ENCODE measurements at regions of chr15 and their contacts with region 1.

Region 1: DNA sequence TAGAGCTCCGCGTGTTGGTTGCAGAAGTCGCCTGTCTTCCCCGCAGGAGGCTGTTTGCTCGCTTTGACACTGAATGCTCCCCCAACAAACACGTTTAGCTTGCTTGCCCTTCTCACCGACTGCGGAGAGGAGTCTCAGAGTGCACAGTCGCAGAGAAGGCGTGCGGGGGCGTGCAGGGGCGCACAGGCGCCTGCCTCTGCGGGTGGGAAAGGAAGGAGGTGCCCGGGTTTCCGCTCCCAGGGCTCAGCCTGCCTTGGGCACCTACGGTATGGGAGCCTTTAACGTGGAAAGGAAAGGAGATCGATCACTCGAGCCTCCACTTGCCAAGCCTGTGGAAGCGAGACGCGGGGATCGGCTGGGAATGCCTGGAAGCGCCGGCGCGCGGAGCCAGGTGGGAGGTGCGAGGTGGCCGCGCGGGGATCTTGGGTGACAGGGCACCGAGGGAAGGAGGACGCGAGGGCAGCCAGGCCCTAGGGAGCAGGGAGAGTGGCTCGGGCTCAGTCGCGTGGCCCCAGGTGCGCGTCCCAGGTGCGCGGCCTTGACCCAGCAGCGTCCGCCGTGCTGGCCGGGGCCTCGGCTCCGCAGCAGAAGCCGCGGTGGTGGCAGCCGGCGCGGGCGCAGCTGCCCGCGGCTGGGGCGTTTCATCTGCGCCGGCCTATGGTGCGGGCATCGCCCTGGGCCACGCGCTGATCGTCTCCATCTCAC is at the start of gene FAN1:
- DNase-seq: peak; percentile 88 to 92
- H3K4me3 ChIP-seq: peak within 1 kb of the TSS; percentile 28 to 83 (median 77)
- H3K27ac ChIP-seq: peak within 1 kb of the TSS; percentile 46 to 70 (median 67)
- H3K4me1 ChIP-seq: peaks cover 8 to 19% of the 10 kb centered on the region in 2 donors
- H3K27me3 ChIP-seq: no peaks in the 10 kb centered on the region
- CTCF ChIP-seq: peak in 1 of 6 experiments; percentile 21
- POLR2A ChIP-seq: peak; percentile 60 to 88
- total RNA-seq, gene FAN1: 24.9 to 26.6 (median 25.9) TPM

Region 2: DNA sequence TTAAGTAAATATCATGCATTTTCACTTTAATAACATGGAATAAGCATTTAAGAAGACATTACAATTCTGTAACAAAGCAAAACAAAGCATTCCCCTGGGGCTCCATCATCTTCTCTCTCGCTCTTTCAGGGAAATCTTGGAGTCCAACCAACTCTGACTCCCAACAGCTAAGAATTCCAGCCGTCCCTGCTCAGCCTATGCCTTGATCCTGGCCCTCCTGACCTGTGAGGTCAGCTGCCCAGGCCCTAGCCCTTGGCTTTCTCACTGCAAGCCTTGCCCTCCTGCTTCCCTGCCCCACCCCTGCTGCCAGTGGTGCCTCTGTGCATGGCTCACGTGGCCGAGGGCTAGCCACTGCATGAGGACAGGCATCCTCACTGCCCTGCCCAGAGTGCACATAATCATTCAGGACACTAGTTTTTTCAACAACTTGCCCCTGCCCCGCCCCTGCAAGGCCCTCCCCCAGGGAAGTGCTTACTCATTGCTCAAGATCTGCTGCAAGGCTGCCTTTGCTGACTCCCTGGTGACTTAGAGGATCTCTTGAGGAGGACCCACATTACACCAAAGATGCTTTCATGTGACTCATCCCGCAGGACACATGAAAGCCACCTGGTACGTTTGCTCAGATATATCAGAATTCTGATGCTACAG is 50.2 kb after region 1 on chr15:
- intact Hi-C with region 1: no loop called
- DNase-seq: no peak
- H3K4me3 ChIP-seq: no peak overlapping the region
- H3K27ac ChIP-seq: no peak overlapping the region
- H3K4me1 ChIP-seq: no peaks in the 10 kb centered on the region
- H3K27me3 ChIP-seq: no peaks in the 10 kb centered on the region
- CTCF ChIP-seq: no peak
- POLR2A ChIP-seq: no peak

Region 3: GRCh38 chr15:30991255-30992072 is 87.8 kb after region 1 on chr15 and contains the start of gene MTMR10:
- intact Hi-C with region 1: loop called (anchors 10 kb)
- DNase-seq: peak; percentile 78 to 81
- H3K4me3 ChIP-seq: peak within 1 kb of the TSS; percentile 29 to 89 (median 63)
- H3K27ac ChIP-seq: peak within 1 kb of the TSS; percentile 96 to 98 (median 97)
- H3K4me1 ChIP-seq: peaks cover 16 to 23% of the 10 kb centered on the region in 2 donors
- H3K27me3 ChIP-seq: no peaks in the 10 kb centered on the region
- CTCF ChIP-seq: peak in 2 of 6 experiments; percentile 2 to 13
- POLR2A ChIP-seq: peak; percentile 24 to 97
- total RNA-seq, gene MTMR10: 36.2 to 64.8 (median 45.9) TPM